ENCODE measurements at regions of chr1 and their contacts with region 1.

Region 1: DNA sequence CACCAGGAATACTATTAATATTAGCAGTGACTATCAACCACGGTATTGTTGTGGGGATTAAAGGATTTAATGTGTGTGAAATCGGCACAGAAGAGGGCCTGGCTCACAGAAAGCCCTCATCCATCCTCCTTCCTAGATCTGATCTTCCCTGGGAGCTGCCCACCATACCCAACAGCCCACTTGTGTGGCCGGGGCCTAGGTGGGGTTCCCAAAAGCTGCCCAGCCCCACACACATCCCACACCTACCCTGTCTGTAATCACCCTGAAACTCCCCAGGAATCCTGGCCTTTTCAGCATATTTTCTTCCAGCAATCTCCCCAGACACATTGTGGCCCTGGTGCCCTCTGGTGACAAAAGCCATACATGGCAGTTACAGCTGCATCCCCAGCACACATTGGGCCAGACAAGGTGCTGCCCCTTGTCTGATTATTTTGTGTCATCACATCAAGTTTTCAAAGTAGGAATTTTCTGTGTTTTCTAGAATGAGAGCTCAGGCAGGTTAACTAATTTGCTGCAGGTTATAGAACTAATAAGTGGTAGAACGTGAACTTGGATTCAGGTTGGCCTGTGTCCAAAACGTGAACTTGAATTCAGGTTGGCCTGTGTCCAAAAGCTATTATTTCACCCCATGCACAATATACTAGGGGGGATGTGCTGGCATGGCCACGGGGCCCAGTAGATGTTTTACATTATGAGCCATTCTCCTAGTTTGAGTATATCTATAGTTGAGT is 5.3 kb upstream of the SLC6A9 start:
- DNase-seq: peak; percentile 42 to 54 (median 51)
- H3K4me3 ChIP-seq: no peak overlapping the region
- H3K4me3 Mint-ChIP-seq: no peak overlapping the region
- H3K27ac ChIP-seq: no peak overlapping the region
- H3K27ac Mint-ChIP-seq: no peak overlapping the region
- H3K4me1 ChIP-seq: no peaks in the 10 kb centered on the region
- H3K4me1 Mint-ChIP-seq: peaks cover 7% of the 10 kb centered on the region
- H3K27me3 ChIP-seq: peaks cover under 1 to 14% of the 10 kb centered on the region in 2 donors
- H3K27me3 Mint-ChIP-seq: peaks cover 14 to 19% (median 18%) of the 10 kb centered on the region in 3 donors
- CTCF ChIP-seq: peak; percentile 75

Region 2: DNA sequence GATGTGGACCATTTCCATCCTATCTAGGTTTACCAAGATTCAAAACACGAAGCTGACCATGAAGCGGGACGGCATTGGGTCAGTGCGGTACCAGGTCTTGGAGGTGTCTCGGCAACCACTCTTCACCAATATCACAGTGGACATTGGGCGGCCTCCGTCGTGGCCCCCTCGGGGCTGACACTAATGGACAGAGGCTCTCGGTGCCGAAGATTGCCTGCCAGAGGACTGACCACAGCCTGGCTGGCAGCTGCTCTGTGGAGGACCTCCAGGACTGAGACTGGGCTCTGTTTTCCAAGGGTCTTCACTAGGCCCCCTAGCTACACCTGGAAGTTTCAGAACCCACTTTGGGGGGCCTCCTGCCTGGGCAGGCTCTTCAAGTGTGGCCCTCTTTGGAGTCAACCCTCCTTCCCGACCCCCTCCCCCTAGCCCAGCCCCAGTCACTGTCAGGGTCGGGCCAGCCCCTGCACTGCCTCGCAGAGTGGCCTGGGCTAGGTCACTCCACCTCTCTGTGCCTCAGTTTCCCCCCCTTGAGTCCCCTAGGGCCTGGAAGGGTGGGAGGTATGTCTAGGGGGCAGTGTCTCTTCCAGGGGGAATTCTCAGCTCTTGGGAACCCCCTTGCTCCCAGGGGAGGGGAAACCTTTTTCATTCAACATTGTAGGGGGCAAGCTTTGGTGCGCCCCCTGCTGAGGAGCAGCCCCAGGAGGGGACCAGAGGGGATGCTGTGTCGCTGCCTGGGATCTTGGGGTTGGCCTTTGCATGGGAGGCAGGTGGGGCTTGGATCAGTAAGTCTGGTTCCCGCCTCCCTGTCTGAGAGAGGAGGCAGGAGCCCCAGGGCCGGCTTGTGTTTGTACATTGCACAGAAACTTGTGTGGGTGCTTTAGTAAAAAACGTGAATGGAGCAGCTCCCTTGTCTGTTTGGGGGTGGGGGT is 46.0 kb before region 1 on chr1:
- intact Hi-C with region 1: no loop called
- DNase-seq: no peak
- H3K4me3 ChIP-seq: peak overlapping the region; percentile 49 to 92 (median 67)
- H3K4me3 Mint-ChIP-seq: peak overlapping the region; percentile 96
- H3K27ac ChIP-seq: peak overlapping the region; percentile 56 to 82
- H3K27ac Mint-ChIP-seq: peak overlapping the region; percentile 79 to 96 (median 89)
- H3K4me1 ChIP-seq: peaks cover 13 to 19% of the 10 kb centered on the region in 2 donors
- H3K4me1 Mint-ChIP-seq: peaks cover 18% of the 10 kb centered on the region
- H3K27me3 ChIP-seq: no peaks in the 10 kb centered on the region
- H3K27me3 Mint-ChIP-seq: peaks cover 2 to 10% (median 8%) of the 10 kb centered on the region in 3 donors
- CTCF ChIP-seq: no peak

Region 3: GRCh38 chr1:44002606-44003157 is 33.9 kb before region 1 on chr1:
- intact Hi-C with region 1: loop called in 1 of 2 experiments (anchors 2 kb)
- DNase-seq: no peak
- H3K4me3 ChIP-seq: no peak overlapping the region
- H3K4me3 Mint-ChIP-seq: no peak overlapping the region
- H3K27ac ChIP-seq: no peak overlapping the region
- H3K27ac Mint-ChIP-seq: no peak overlapping the region
- H3K4me1 ChIP-seq: no peaks in the 10 kb centered on the region
- H3K4me1 Mint-ChIP-seq: no peaks in the 10 kb centered on the region
- H3K27me3 ChIP-seq: no peaks in the 10 kb centered on the region
- H3K27me3 Mint-ChIP-seq: peaks cover 3 to 8% (median 6%) of the 10 kb centered on the region in 3 donors
- CTCF ChIP-seq: peak; percentile 24